Naive thymus-derived CD4-positive, alpha-beta T cell (primary cell): ENCODE measurements at regions of chr18 and their contacts with region 1.

Region 1: GRCh38 chr18:58661423-58661822 is 9.8 kb upstream of the MALT1 start:
- DNase-seq: no peak
- ATAC-seq: no peak
- H3K4me3 ChIP-seq: no peak overlapping the region
- H3K4me3 Mint-ChIP-seq: no peak overlapping the region
- H3K27ac ChIP-seq: no peak overlapping the region
- H3K27ac Mint-ChIP-seq: peak overlapping the region in 1 of 9 donors; percentile 22
- H3K4me1 ChIP-seq: peaks cover 31 to 33% of the 10 kb centered on the region in 2 donors
- H3K4me1 Mint-ChIP-seq: peaks cover 38 to 68% (median 62%) of the 10 kb centered on the region in 7 donors
- H3K27me3 ChIP-seq: no peaks in the 10 kb centered on the region
- H3K27me3 Mint-ChIP-seq: no peaks in the 10 kb centered on the region

Region 2: GRCh38 chr18:58552057-58552461 is 109.4 kb before region 1 on chr18:
- CTCF ChIA-PET with region 1: no interaction called
- POLR2A ChIA-PET with region 1: no interaction called
- intact Hi-C with region 1: no loop called
- DNase-seq: no peak
- ATAC-seq: peak; percentile 45
- H3K4me3 ChIP-seq: no peak overlapping the region
- H3K4me3 Mint-ChIP-seq: no peak overlapping the region
- H3K27ac ChIP-seq: no peak overlapping the region
- H3K27ac Mint-ChIP-seq: no peak overlapping the region
- H3K4me1 ChIP-seq: no peaks in the 10 kb centered on the region
- H3K4me1 Mint-ChIP-seq: peaks cover under 1 to 15% (median 9%) of the 10 kb centered on the region in 7 donors
- H3K27me3 ChIP-seq: no peaks in the 10 kb centered on the region
- H3K27me3 Mint-ChIP-seq: peaks cover 0 to 10% (median 0%) of the 10 kb centered on the region in 5 donors

Region 3: DNA sequence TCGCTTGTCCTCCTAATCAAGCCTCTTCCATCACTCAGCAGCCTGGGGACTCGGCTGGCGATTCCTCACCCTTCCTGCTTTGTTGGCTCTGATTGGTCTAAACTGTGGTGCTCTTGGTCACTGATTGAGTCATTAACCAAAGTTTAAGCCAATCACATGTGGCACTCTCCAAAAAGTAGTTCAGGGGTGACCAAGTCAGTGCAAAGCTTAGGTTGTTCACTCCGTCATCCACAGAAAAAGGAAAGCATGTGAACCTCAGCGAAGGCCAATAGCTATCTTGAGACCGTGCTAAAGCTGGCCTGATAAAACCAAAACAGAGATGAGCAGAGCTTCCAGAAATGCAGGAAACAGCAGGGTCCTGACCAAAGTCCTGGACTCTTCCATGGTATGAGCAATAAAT is 37.4 kb before region 1 on chr18:
- CTCF ChIA-PET with region 1: interaction called, 3 read pairs
- POLR2A ChIA-PET with region 1: interaction called, 13 read pairs
- intact Hi-C with region 1: loop called in 1 of 2 experiments (anchors 1 kb)
- DNase-seq: no peak
- ATAC-seq: no peak
- H3K4me3 ChIP-seq: no peak overlapping the region
- H3K4me3 Mint-ChIP-seq: no peak overlapping the region
- H3K27ac ChIP-seq: no peak overlapping the region
- H3K27ac Mint-ChIP-seq: no peak overlapping the region
- H3K4me1 ChIP-seq: peaks cover 0 to 5% of the 10 kb centered on the region in 2 donors
- H3K4me1 Mint-ChIP-seq: peaks cover 5 to 30% (median 18%) of the 10 kb centered on the region in 7 donors
- H3K27me3 ChIP-seq: no peaks in the 10 kb centered on the region
- H3K27me3 Mint-ChIP-seq: peaks cover 0 to 37% (median 0%) of the 10 kb centered on the region in 5 donors

Region 4: GRCh38 chr18:58631301-58631700 is 30.1 kb before region 1 on chr18:
- CTCF ChIA-PET with region 1: interaction called, 3 read pairs
- POLR2A ChIA-PET with region 1: interaction called, 13 read pairs
- intact Hi-C with region 1: loop called in 1 of 2 experiments (anchors 1 kb)
- DNase-seq: no peak
- ATAC-seq: no peak
- H3K4me3 ChIP-seq: no peak overlapping the region
- H3K4me3 Mint-ChIP-seq: no peak overlapping the region
- H3K27ac ChIP-seq: no peak overlapping the region
- H3K27ac Mint-ChIP-seq: no peak overlapping the region
- H3K4me1 ChIP-seq: peaks cover 0 to 16% of the 10 kb centered on the region in 2 donors
- H3K4me1 Mint-ChIP-seq: peaks cover 12 to 57% (median 38%) of the 10 kb centered on the region in 7 donors
- H3K27me3 ChIP-seq: no peaks in the 10 kb centered on the region
- H3K27me3 Mint-ChIP-seq: peaks cover 0 to 15% (median 0%) of the 10 kb centered on the region in 5 donors

Region 5: GRCh38 chr18:58649966-58650816 is 11.2 kb before region 1 on chr18:
- CTCF ChIA-PET with region 1: no interaction called
- POLR2A ChIA-PET with region 1: interaction called, 4 read pairs
- intact Hi-C with region 1: loop called in 1 of 2 experiments (anchors 1 kb)
- DNase-seq: peak in 7 of 9 donors; percentile 21 to 65 (median 53)
- ATAC-seq: peak; percentile 87
- H3K4me3 ChIP-seq: no peak overlapping the region
- H3K4me3 Mint-ChIP-seq: peak overlapping the region; percentile 8 to 77 (median 60)
- H3K27ac ChIP-seq: no peak overlapping the region
- H3K27ac Mint-ChIP-seq: peak overlapping the region in 8 of 9 donors; percentile 17 to 88 (median 47)
- H3K4me1 ChIP-seq: peaks cover 15 to 27% of the 10 kb centered on the region in 2 donors
- H3K4me1 Mint-ChIP-seq: peaks cover 28 to 72% (median 58%) of the 10 kb centered on the region in 7 donors
- H3K27me3 ChIP-seq: no peaks in the 10 kb centered on the region
- H3K27me3 Mint-ChIP-seq: peaks cover 0 to 6% (median 0%) of the 10 kb centered on the region in 5 donors